Left ventricle myocardium superior (tissue), 1 donor: ENCODE measurements at regions of chr14 and their contacts with region 1.

Region 1: GRCh38 chr14:68911594-68912227 is 67.4 kb downstream of the ACTN1 start:
- DNase-seq: peak; percentile 75
- ATAC-seq: peak; percentile 92

Region 2: GRCh38 chr14:68027276-68027675 is 884.4 kb before region 1 on chr14:
- intact Hi-C with region 1: no loop called
- DNase-seq: no peak
- ATAC-seq: no peak

Region 3: DNA sequence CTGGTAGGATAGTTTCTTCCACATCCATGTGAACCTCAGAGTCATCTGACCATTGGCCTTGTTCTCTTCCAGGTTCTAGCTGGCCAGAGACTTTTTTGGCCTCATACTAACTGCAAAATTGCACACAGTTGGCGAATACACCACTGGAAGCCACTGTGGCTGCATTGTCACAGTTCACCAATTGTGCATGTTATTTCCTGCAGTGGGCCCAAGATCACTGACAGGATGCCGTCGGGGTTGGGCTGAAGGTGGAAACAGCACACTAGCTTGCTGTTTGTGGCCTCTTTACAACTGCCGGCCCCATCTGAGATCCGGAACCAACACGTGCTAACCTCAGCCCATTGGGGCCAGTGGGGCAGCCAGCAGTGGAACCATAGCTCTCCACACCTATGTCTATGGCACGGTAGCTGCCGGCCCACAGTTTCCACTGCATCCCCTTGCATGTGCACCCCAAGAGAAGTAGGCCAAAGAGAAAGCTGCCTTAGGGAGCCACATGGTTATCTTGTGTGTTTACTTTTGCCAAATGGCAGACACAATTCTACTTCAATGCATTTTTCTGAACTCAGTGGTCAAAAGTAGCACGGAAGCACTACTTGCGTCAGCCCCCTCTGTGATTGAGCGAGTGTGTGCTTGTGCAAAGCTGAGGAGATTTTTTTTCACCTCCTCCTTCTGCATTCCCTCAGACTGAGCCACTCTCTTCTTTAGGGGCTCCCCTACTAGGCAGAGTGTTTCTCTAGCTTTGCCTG is 628.2 kb before region 1 on chr14:
- intact Hi-C with region 1: no loop called
- DNase-seq: peak; percentile 41
- ATAC-seq: peak; percentile 63

Region 4: DNA sequence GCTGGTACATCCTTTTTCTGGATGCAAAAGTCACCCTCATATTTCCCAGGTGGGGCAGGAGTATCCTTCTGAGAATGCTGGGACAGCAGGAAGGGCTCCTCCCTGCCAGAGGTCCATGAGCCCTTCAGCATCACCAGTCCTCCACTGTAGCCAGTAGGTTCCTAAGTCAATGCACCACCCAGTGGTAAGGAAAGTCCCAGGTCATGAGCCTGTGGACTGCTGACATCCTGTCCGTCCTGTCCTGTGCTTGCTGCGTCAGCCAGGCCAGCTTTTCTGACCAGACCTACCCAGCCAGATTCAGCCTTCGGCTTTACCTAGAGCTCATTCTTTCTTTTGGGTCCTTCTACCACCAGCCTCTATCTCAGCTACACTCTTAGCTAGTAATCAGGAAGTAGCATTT is 90.4 kb after region 1 on chr14:
- intact Hi-C with region 1: loop called (anchors 5 kb)
- DNase-seq: no peak
- ATAC-seq: peak; percentile 93

Region 5: GRCh38 chr14:69090187-69090789 is 178.6 kb after region 1 on chr14:
- intact Hi-C with region 1: loop called (anchors 5 kb)
- DNase-seq: no peak
- ATAC-seq: peak; percentile 54